ENCODE measurements at regions of chr12 and their contacts with region 1.

Region 1: GRCh38 chr12:14756334-14757143 is 46.7 kb downstream of the WBP11 start:
- DNase-seq: peak; percentile 42
- H3K4me3 ChIP-seq: no peak overlapping the region
- H3K27ac ChIP-seq: no peak overlapping the region
- H3K4me1 ChIP-seq: peaks cover 3% of the 10 kb centered on the region
- H3K27me3 ChIP-seq: no peaks in the 10 kb centered on the region
- CTCF ChIP-seq: peak; percentile 60

Region 2: DNA sequence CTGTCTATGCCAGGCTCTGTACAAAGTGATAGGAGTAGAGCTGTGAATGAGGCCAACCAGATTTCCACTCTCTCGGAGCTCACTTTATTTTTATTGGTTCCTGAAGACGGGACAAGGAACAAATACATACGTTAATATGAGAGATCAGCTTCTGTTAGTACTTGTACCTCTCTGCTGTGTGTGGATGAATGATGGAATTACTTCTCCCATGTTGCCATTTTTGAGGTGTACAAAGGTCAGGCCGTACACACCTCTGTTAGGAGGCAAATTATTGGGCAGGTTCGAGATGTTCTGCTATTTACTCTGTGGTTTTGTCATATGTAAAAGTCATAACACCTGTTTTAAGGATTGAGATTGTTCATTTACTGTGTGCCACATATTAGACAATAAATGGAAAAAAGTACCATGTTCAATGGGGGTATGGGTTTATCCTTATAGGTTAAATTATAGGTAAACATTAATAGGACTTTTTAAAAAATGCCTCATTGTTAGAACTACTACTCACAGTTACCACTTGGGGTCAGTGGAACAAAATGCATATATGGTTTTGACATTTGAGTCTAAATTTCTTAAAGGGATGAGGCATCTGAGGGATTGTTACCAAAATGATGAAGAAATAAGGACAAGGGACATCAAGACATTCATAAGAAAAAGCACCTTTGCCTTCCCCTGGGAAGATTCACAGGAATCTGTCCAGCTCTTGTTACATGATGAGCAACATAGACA is 19.9 kb after region 1 on chr12:
- CTCF ChIA-PET with region 1: no interaction called
- POLR2A ChIA-PET with region 1: interaction called, 18 read pairs
- intact Hi-C with region 1: no loop called
- DNase-seq: peak; percentile 22
- H3K4me3 ChIP-seq: no peak overlapping the region
- H3K27ac ChIP-seq: no peak overlapping the region
- H3K4me1 ChIP-seq: peaks cover 10% of the 10 kb centered on the region
- H3K27me3 ChIP-seq: no peaks in the 10 kb centered on the region
- CTCF ChIP-seq: peak; percentile 30; the same call in 1 of the 2 replicates

Region 3: GRCh38 chr12:14854586-14855183 is 98.1 kb after region 1 on chr12:
- CTCF ChIA-PET with region 1: no interaction called
- POLR2A ChIA-PET with region 1: no interaction called
- intact Hi-C with region 1: no loop called
- DNase-seq: no peak
- H3K4me3 ChIP-seq: no peak overlapping the region
- H3K27ac ChIP-seq: no peak overlapping the region
- H3K4me1 ChIP-seq: no peaks in the 10 kb centered on the region
- H3K27me3 ChIP-seq: no peaks in the 10 kb centered on the region
- CTCF ChIP-seq: no peak